ENCODE measurements at regions of chr12 and their contacts with region 1.

Region 1: DNA sequence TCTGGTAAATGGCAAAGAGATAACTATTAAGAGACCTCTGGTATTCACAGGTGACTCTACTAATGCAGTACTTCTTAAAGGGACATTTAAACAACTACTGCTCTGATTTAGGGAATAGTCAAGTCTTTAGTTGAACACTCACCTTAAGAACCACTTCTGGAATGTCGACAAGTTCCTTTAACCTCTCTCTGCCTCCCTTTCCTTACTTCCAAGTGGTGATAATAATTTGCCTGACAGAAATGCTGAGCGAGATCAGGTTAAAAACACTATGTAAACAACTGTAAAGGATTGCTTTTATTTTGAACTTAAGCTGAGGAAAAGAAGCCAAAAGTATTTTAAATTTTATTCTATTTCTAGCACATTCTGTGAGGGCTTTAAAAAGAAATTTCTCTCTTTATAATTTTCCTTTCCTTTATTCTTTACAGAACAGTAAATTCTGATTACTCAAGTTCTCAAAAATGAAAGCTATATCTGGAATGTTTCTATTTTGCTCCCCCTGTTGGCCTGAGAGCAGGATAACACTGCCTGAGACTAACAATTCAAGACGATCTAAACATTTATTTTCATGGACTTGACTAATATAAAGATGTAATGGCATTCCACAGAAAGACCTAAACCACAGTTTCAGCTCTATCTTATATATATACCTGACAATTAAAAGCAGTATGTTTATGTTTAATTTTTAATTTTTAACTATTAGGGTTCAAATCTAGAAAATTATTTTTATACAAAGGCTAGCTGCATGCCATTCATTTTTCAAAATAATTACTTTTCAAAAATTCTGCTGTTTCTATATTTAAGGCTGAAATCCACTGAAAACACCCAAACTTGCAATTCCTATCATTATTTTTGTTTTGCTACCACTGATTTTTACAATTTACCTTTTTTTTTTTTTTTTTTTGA is 29.2 kb downstream of the ZCCHC8 start:
- DNase-seq: peak in 2 of 5 donors; percentile 71 to 92
- H3K4me3 ChIP-seq: peak overlapping the region in 1 of 3 donors; percentile 36
- H3K27ac ChIP-seq: peak overlapping the region; percentile 58 to 71
- H3K4me1 ChIP-seq: peaks cover 0 to 2% (median 0%) of the 10 kb centered on the region in 3 donors
- H3K27me3 ChIP-seq: no peaks in the 10 kb centered on the region
- CTCF ChIP-seq: peak; percentile 83

Region 2: GRCh38 chr12:122031342-122032216 is 440.0 kb before region 1 on chr12:
- intact Hi-C with region 1: no loop called
- DNase-seq: peak in 1 of 5 donors; percentile 49
- H3K4me3 ChIP-seq: no peak overlapping the region
- H3K27ac ChIP-seq: peak overlapping the region in 1 of 2 donors; percentile 85
- H3K4me1 ChIP-seq: peaks cover 0 to 35% (median 21%) of the 10 kb centered on the region in 3 donors
- H3K27me3 ChIP-seq: no peaks in the 10 kb centered on the region
- CTCF ChIP-seq: peak; percentile 59

Region 3: DNA sequence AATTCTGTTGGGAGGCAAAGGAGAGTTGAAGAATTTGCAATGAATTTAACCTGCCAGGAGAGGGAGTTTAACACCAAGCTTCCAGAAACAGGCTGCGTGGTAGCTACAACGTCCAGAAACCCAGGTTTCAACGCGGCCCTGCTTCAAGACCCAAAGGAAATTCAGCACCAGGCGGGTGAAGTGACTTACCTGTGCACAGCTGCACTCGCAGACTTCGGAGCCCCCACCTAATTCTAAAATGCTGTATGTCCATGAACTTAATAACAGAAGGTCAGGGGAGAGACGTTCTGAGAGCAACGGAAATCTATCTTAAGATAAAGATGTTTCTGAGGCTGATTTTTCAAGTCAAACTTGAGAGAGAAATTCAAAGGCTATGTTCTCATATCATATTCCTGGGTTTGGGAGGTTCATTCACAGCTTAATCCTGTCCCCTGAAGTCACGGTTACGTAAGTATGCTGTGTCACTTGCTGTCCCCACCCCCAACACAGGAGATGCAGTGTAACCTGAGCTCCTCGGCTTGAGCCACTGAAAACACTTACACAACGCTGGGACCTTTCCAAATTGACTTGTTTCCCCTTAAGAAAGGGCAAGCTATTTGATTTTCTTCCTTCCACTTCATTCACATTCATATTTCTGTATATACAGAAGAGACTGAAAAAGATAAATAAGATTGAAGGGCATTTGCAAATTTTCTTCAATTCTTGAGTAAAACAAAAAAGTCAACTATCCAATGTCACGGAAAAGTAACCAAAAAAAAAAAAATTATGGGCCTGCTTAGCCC is 71.8 kb before region 1 on chr12:
- intact Hi-C with region 1: loop called (anchors 10 kb)
- DNase-seq: peak in 4 of 5 donors; percentile 71 to 93 (median 84)
- H3K4me3 ChIP-seq: peak overlapping the region; percentile 18 to 52 (median 31)
- H3K27ac ChIP-seq: peak overlapping the region; percentile 94 to 97
- H3K4me1 ChIP-seq: peaks cover 4 to 11% (median 11%) of the 10 kb centered on the region in 3 donors
- H3K27me3 ChIP-seq: no peaks in the 10 kb centered on the region
- CTCF ChIP-seq: peak; percentile 84

Region 4: GRCh38 chr12:122659519-122659918 is 187.9 kb after region 1 on chr12:
- intact Hi-C with region 1: no loop called
- DNase-seq: peak in 1 of 5 donors; percentile 78
- H3K4me3 ChIP-seq: no peak overlapping the region
- H3K27ac ChIP-seq: no peak overlapping the region
- H3K4me1 ChIP-seq: peaks cover 0 to 2% (median 0%) of the 10 kb centered on the region in 3 donors
- H3K27me3 ChIP-seq: no peaks in the 10 kb centered on the region
- CTCF ChIP-seq: no peak

Region 5: GRCh38 chr12:123050331-123050831 is 578.8 kb after region 1 on chr12:
- intact Hi-C with region 1: no loop called
- DNase-seq: no peak
- H3K4me3 ChIP-seq: no peak overlapping the region
- H3K27ac ChIP-seq: peak overlapping the region in 1 of 2 donors; percentile 13
- H3K4me1 ChIP-seq: peaks cover 0 to 2% (median 2%) of the 10 kb centered on the region in 3 donors
- H3K27me3 ChIP-seq: no peaks in the 10 kb centered on the region
- CTCF ChIP-seq: no peak